ENCODE measurements at regions of chr18 and their contacts with region 1.

Region 1: GRCh38 chr18:66638856-66639629 is 35.2 kb upstream of the CDH19 start:
- DNase-seq: no peak
- ATAC-seq: no peak
- H3K4me3 ChIP-seq: no peak overlapping the region
- H3K27ac ChIP-seq: peak overlapping the region in 2 of 12 donors; percentile 6 to 19
- H3K4me1 ChIP-seq: peaks cover 0 to 9% (median 0%) of the 10 kb centered on the region in 12 donors
- H3K27me3 ChIP-seq: no peaks in the 10 kb centered on the region
- CTCF ChIP-seq: no peak
- POLR2A ChIP-seq: no peak

Region 2: DNA sequence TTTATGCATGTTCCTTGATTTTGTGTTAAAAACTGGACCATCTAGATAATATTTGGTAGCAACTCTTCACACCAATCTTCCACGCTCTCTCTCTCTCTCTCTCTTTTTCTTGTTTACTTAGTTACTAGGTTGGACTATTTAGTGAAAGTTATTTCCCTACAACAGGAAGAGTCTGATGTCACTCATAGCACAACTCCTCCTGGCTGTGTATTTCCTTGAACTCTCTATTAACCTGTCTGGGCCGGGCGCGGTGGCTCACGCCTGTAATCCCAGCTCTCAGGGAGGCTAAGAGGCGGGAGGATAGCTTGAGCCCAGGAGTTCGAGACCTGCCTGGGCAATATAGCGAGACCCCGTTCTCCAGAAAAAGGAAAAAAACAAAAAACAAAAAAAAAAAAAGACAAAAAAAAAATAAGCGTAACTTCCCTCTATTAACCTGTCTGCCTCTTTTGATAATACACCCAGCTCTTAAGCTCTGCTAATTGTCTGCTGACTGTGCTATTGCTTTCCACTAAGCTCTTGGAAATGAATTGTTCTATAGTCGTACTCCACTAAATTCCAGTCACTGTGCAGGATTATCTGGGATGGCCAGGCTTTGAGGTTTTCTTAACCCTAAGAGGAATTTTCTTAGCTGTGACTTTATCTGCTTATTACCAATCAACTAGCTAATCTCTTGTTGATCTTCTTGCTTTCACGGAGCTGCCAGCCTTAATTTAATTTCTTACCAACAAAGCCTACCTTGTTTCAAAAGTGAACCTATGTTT is 17.0 kb before region 1 on chr18:
- intact Hi-C with region 1: loop called in 1 of 10 experiments (anchors 2 kb)
- DNase-seq: no peak
- ATAC-seq: no peak
- H3K4me3 ChIP-seq: no peak overlapping the region
- H3K27ac ChIP-seq: no peak overlapping the region
- H3K4me1 ChIP-seq: no peaks in the 10 kb centered on the region
- H3K27me3 ChIP-seq: no peaks in the 10 kb centered on the region
- CTCF ChIP-seq: no peak
- POLR2A ChIP-seq: no peak

Measured in heart left ventricle (tissue), 16 donors.